ENCODE measurements at regions of chr10 and their contacts with region 1.

Region 1: GRCh38 chr10:120628197-120628596 is 171.2 kb downstream of the PLPP4 start:
- DNase-seq: no peak
- ATAC-seq: no peak
- H3K4me3 ChIP-seq: no peak overlapping the region
- H3K27ac ChIP-seq: no peak overlapping the region
- H3K4me1 ChIP-seq: no peaks in the 10 kb centered on the region
- H3K27me3 ChIP-seq: no peaks in the 10 kb centered on the region
- CTCF ChIP-seq: no peak
- EP300 ChIP-seq: no peak
- POLR2A ChIP-seq: no peak
- RAD21 ChIP-seq: no peak

Region 2: GRCh38 chr10:120172356-120172755 is 455.8 kb before region 1 on chr10:
- CTCF ChIA-PET with region 1: no interaction called
- POLR2A ChIA-PET with region 1: no interaction called
- in situ Hi-C with region 1: no loop called
- intact Hi-C with region 1: loop called (anchors 5 kb)
- DNase-seq: no peak
- ATAC-seq: no peak
- H3K4me3 ChIP-seq: no peak overlapping the region
- H3K27ac ChIP-seq: no peak overlapping the region
- H3K4me1 ChIP-seq: no peaks in the 10 kb centered on the region
- H3K27me3 ChIP-seq: no peaks in the 10 kb centered on the region
- CTCF ChIP-seq: no peak
- EP300 ChIP-seq: no peak
- POLR2A ChIP-seq: no peak
- RAD21 ChIP-seq: no peak

Region 3: GRCh38 chr10:120613180-120613579 is 15.0 kb before region 1 on chr10:
- CTCF ChIA-PET with region 1: no interaction called
- POLR2A ChIA-PET with region 1: no interaction called
- in situ Hi-C with region 1: no loop called
- intact Hi-C with region 1: no loop called
- DNase-seq: no peak
- ATAC-seq: no peak
- H3K4me3 ChIP-seq: no peak overlapping the region
- H3K27ac ChIP-seq: no peak overlapping the region
- H3K4me1 ChIP-seq: no peaks in the 10 kb centered on the region
- H3K27me3 ChIP-seq: no peaks in the 10 kb centered on the region
- CTCF ChIP-seq: no peak
- EP300 ChIP-seq: no peak
- POLR2A ChIP-seq: no peak
- RAD21 ChIP-seq: no peak

Region 4: DNA sequence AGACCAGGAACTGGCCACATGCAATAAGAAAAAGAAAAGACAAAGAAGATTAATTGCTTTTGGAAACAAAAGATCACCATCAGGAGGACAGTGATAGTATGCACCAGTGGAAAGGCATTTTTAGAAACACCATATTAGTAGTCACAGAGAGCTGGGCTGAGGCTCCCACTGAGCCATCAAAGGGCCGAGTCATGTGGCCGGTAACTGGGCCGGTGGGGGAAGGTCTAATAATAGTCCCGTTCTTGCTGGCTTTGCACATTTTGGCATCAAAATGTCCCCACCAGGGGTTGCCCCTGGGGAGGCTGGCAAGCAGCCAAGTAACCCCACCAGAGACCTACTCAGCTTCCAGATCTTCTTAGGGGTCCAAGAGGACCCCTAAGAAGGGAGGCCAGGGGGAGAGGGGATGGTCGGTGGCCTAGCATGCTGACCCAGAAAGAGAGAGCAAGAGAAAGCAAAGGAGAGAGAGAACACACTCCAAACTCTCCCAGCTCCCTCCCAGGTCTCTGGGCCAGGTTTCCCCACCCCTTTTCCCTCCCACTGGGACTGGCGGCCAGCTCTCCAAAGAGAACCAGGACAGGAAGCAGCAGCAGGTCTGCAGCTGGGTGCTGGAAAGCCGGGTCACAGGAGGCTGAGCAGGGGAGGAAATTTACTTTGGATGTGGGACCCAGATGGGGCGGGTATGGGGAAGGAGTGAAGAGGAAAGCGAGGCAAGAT is 1040.3 kb after region 1 on chr10:
- CTCF ChIA-PET with region 1: no interaction called
- POLR2A ChIA-PET with region 1: no interaction called
- in situ Hi-C with region 1: no loop called
- intact Hi-C with region 1: no loop called
- DNase-seq: no peak
- ATAC-seq: no peak
- H3K4me3 ChIP-seq: no peak overlapping the region
- H3K27ac ChIP-seq: no peak overlapping the region
- H3K4me1 ChIP-seq: no peaks in the 10 kb centered on the region
- H3K27me3 ChIP-seq: peaks cover 0 to 16% of the 10 kb centered on the region in 2 experiments; a peak in 2 of 5 replicates
- CTCF ChIP-seq: no peak
- EP300 ChIP-seq: no peak
- POLR2A ChIP-seq: no peak
- RAD21 ChIP-seq: no peak

Measured in K562 (cell line).